ENCODE measurements at regions of chr15 and their contacts with region 1.

Region 1: GRCh38 chr15:34837246-34838016 is 42.1 kb upstream of the ACTC1 start:
- DNase-seq: no peak
- ATAC-seq: peak; percentile 45 to 84 (median 76)
- H3K4me3 ChIP-seq: no peak overlapping the region
- H3K27ac ChIP-seq: peak overlapping the region; percentile 40
- H3K4me1 ChIP-seq: no peaks in the 10 kb centered on the region
- H3K27me3 ChIP-seq: no peaks in the 10 kb centered on the region
- CTCF ChIP-seq: no peak

Region 2: DNA sequence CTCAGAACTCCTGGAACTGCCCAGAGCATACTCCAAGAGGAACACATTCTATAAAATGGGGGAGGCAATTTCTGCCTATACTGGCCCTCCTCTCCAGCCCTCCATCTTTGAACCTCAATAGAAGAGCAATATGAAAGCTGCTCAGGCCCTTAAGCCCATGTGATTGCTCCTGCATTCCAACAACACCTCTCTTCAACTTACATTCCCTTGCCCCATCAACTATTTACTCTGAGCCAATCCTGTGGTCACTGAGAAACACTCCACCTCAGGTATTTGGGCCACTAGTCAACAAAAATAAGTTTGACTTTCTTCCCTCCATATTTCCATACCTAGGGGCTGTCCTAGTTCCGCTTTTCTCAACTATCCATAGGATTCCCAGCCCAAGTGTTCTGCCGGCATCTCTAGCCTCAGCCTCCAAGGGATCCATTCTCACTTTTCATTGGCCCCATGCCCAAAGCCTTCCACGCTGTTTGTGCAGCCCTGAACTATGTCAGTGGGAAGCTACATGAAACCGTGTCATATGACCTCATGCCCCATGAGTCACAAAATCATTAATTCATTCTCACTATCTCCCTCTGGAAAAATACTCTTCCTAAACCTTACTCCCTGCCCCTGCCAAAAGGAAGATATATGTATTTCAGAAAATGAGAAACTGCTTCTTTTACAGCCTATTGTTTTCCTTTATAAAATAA is 144.2 kb before region 1 on chr15:
- intact Hi-C with region 1: loop called in 1 of 2 experiments (anchors 10 kb)
- DNase-seq: no peak
- ATAC-seq: no peak
- H3K4me3 ChIP-seq: no peak overlapping the region
- H3K27ac ChIP-seq: no peak overlapping the region
- H3K4me1 ChIP-seq: no peaks in the 10 kb centered on the region
- H3K27me3 ChIP-seq: peaks cover 0 to 6% (median 3%) of the 10 kb centered on the region in 3 donors
- CTCF ChIP-seq: no peak

Region 3: GRCh38 chr15:34942363-34942762 is 104.9 kb after region 1 on chr15:
- intact Hi-C with region 1: no loop called
- DNase-seq: no peak
- ATAC-seq: no peak
- H3K4me3 ChIP-seq: no peak overlapping the region
- H3K27ac ChIP-seq: no peak overlapping the region
- H3K4me1 ChIP-seq: no peaks in the 10 kb centered on the region
- H3K27me3 ChIP-seq: no peaks in the 10 kb centered on the region
- CTCF ChIP-seq: no peak

Region 4: GRCh38 chr15:35000511-35000910 is 163.1 kb after region 1 on chr15:
- intact Hi-C with region 1: no loop called
- DNase-seq: peak in 1 of 2 donors; percentile 32
- ATAC-seq: peak; percentile 89 to 99 (median 94)
- H3K4me3 ChIP-seq: no peak overlapping the region
- H3K27ac ChIP-seq: no peak overlapping the region
- H3K4me1 ChIP-seq: no peaks in the 10 kb centered on the region
- H3K27me3 ChIP-seq: peaks cover 0 to 3% (median 0%) of the 10 kb centered on the region in 3 donors
- CTCF ChIP-seq: no peak